ENCODE measurements at regions of chr22 and their contacts with region 1.

Region 1: GRCh38 chr22:20507253-20508066 is at the start of gene MED15:
- DNase-seq: peak; percentile 82 to 90 (median 84)
- H3K4me3 ChIP-seq: peak within 1 kb of the TSS; percentile 85 to 98
- H3K4me3 Mint-ChIP-seq: peak within 1 kb of the TSS; percentile 93 to 99 (median 97)
- H3K27ac ChIP-seq: peak within 1 kb of the TSS; percentile 93
- H3K27ac Mint-ChIP-seq: peak within 1 kb of the TSS; percentile 86 to 99 (median 96)
- H3K4me1 ChIP-seq: peaks cover 50% of the 10 kb centered on the region
- H3K4me1 Mint-ChIP-seq: peaks cover 42 to 57% (median 50%) of the 10 kb centered on the region in 4 donors
- H3K27me3 ChIP-seq: no peaks in the 10 kb centered on the region
- H3K27me3 Mint-ChIP-seq: no peaks in the 10 kb centered on the region
- total RNA-seq, gene MED15: 225 to 237 TPM

Region 2: GRCh38 chr22:20523086-20523983 is 15.9 kb after region 1 on chr22:
- CTCF ChIA-PET with region 1: interaction called, 4 read pairs
- POLR2A ChIA-PET with region 1: interaction called, 13 read pairs
- intact Hi-C with region 1: no loop called
- DNase-seq: peak; percentile 11 to 50 (median 22)
- H3K4me3 ChIP-seq: no peak overlapping the region
- H3K4me3 Mint-ChIP-seq: peak overlapping the region in 7 of 8 donors; percentile 50 to 87 (median 71)
- H3K27ac ChIP-seq: peak overlapping the region; percentile 11
- H3K27ac Mint-ChIP-seq: peak overlapping the region; percentile 77 to 97 (median 93)
- H3K4me1 ChIP-seq: peaks cover 75% of the 10 kb centered on the region
- H3K4me1 Mint-ChIP-seq: peaks cover 48 to 80% (median 64%) of the 10 kb centered on the region in 4 donors
- H3K27me3 ChIP-seq: no peaks in the 10 kb centered on the region
- H3K27me3 Mint-ChIP-seq: no peaks in the 10 kb centered on the region

Region 3: DNA sequence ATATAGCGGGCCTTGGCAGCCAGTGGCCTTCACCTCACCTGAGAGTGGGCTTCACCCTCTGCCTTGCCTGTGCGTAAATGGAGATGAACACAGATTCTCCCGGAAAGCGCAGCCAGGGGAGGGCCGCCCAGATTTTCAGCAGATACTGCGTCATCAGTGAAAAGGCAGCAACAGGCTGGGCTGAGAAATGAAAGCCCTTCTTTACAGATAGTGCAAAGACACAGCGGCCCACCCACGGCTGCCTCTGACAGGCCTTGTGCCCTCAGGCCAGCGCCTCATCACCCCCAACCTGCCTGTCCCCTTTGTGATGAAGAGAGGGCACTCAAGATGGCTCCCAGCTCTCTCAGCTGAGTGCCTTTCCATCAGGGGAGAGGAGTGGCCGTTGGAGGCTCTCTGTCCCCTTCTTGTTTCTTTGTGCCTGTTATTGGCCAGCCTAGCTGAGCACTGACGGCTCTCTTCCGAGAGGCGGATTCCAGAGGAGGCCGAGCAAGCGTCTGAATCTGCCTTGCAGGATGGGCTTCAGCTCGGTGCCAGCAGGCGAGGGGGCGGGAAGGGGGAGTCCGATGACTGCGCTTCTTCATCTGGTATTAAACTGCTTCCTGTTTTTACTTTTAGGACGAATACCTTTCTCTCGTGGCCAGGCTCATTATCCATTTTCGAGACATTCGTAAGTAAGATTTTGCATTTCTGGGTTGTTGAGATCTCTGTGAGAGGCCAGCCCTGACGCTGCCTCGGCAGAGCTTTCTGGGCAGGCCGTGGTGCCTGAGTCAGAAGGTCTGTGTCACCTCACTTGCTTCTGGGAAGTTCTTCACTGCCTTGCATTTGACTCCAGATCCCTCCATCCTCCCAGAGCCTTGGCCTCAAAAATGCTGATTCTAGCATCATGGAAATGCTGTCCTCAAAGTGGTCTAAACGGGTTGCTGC is 43.6 kb after region 1 on chr22:
- CTCF ChIA-PET with region 1: interaction called, 9 read pairs
- POLR2A ChIA-PET with region 1: interaction called, 209 read pairs
- intact Hi-C with region 1: loop called (anchors 1 kb)
- DNase-seq: peak; percentile 45 to 73 (median 57)
- H3K4me3 ChIP-seq: peak overlapping the region; percentile 7 to 15
- H3K4me3 Mint-ChIP-seq: peak overlapping the region; percentile 84 to 89 (median 88)
- H3K27ac ChIP-seq: peak overlapping the region; percentile 75
- H3K27ac Mint-ChIP-seq: peak overlapping the region; percentile 92 to 99 (median 98)
- H3K4me1 ChIP-seq: peaks cover 91% of the 10 kb centered on the region
- H3K4me1 Mint-ChIP-seq: peaks cover 58 to 92% (median 76%) of the 10 kb centered on the region in 4 donors
- H3K27me3 ChIP-seq: no peaks in the 10 kb centered on the region
- H3K27me3 Mint-ChIP-seq: no peaks in the 10 kb centered on the region

Measured in CD4-positive, alpha-beta memory T cell (primary cell).